Activated CD8-positive, alpha-beta T cell treated with anti-CD3 and anti-CD28 coated beads, Interleukin-2, amount 10 ng/mL, durations not matched to agents 7 days and 5 days (primary cell): ENCODE measurements at regions of chr9 and their contacts with region 1.

Region 1: GRCh38 chr9:128117613-128118471 is 9.7 kb downstream of the PTGES2 start:
- DNase-seq: peak; percentile 98
- ATAC-seq: peak; percentile 90
- H3K4me3 Mint-ChIP-seq: no peak overlapping the region
- H3K27ac Mint-ChIP-seq: no peak overlapping the region
- H3K4me1 Mint-ChIP-seq: peaks cover 10% of the 10 kb centered on the region
- H3K27me3 Mint-ChIP-seq: no peaks in the 10 kb centered on the region

Region 2: DNA sequence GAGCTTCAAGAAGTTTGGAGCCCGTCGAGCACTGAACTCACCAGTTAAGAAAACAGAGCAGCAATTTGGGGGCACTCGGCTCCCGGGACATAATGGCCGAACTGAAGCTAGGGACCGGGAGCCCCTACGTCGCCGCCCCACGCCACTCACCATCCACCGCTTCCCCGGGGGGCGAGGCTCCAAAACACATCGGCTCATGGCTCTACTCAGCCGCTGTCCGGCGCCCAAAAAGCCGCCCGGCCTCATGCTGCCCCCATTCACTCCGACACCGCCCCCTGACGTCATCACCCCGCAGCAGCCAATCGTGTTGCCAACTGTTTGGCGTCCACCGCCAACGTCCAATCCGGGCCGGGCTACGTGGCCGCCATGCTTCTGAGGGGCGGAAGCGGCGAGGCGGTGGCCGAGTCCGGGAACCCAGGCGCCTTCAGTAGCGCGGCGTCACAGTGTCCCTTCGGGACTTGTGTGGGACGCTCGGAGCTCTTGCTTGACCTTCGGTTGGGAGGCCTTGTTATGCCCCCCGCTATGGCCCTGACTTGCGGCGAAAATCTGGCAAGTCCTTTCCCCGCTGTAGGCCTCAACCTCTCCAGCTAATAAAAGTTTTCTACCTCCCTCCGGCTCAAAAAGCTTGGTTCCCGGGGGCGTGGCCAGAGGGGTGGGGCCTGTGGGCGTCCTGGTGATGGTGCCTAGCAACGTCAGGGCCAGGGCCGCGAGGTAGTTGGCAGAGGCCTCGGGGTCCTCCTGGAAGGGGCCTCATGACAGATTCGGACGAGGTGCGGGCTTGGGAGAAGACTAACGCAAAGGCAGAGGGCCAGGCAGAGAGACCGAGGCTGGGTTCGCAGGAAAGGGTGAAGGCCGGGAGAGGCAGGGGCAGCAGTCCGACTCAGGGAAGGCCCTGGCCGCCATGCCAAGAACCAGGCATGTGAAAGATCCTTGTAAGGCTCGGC is 402.2 kb before region 1 on chr9 and contains the starts of genes PTRH1 and TTC16:
- CTCF ChIA-PET with region 1: no interaction called
- POLR2A ChIA-PET with region 1: no interaction called
- DNase-seq: peak; percentile 98
- ATAC-seq: peak; percentile 95
- H3K4me3 Mint-ChIP-seq: peak within 1 kb of the TSS; percentile 99
- H3K27ac Mint-ChIP-seq: peak within 1 kb of the TSS; percentile 96
- H3K4me1 Mint-ChIP-seq: peaks cover 42% of the 10 kb centered on the region
- H3K27me3 Mint-ChIP-seq: peaks cover 2% of the 10 kb centered on the region
- total RNA-seq, gene PTRH1: 10.2 to 14.1 TPM
- total RNA-seq, gene TTC16: 4.7 to 5.0 TPM

Region 3: GRCh38 chr9:127955294-127956035 is 162.4 kb before region 1 on chr9:
- CTCF ChIA-PET with region 1: interaction called, 13 read pairs
- POLR2A ChIA-PET with region 1: no interaction called
- DNase-seq: peak; percentile 83
- ATAC-seq: peak; percentile 96
- H3K4me3 Mint-ChIP-seq: peak overlapping the region; percentile 21
- H3K27ac Mint-ChIP-seq: peak overlapping the region; percentile 70
- H3K4me1 Mint-ChIP-seq: peaks cover 89% of the 10 kb centered on the region
- H3K27me3 Mint-ChIP-seq: no peaks in the 10 kb centered on the region

Region 4: DNA sequence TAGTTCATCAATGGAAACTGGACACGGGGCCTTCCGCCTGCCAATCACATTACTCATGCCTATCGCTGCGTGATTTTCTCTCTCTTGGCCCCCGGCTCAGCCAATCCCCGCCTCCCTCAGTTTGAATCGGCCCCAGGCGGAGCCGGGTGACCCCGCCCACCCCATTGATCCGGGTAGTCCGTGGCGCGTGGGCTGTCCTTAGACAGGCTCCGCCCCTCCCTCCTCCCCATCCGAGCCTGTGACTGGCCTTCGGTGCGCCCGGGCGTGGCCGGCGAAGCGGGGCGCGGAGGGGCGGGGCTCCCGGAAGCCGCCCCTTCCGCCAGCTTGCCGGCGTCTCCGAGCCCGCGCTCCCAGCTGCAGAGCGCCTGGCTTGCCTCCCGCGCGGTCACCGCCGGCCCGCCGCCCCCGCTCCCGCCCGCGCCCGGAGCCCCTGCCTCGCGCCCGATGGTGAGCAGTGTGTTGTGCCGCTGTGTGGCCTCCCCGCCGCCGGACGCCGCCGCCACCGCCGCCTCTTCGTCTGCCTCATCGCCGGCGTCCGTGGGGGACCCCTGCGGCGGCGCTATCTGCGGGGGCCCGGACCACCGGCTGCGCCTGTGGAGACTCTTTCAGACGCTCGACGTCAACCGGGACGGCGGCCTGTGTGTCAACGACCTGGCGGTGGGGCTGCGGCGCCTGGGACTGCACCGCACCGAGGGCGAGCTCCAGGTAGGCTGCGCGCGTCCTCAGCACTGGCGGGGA is 49.8 kb before region 1 on chr9 and contains the start of gene SLC25A25:
- CTCF ChIA-PET with region 1: interaction called, 18 read pairs
- POLR2A ChIA-PET with region 1: no interaction called
- DNase-seq: peak; percentile 100
- ATAC-seq: peak; percentile 82
- H3K4me3 Mint-ChIP-seq: peak within 1 kb of the TSS; percentile 99
- H3K27ac Mint-ChIP-seq: peak within 1 kb of the TSS; percentile 90
- H3K4me1 Mint-ChIP-seq: peaks cover 50% of the 10 kb centered on the region
- H3K27me3 Mint-ChIP-seq: no peaks in the 10 kb centered on the region
- total RNA-seq, gene SLC25A25: 17.2 to 19.2 TPM

Region 5: DNA sequence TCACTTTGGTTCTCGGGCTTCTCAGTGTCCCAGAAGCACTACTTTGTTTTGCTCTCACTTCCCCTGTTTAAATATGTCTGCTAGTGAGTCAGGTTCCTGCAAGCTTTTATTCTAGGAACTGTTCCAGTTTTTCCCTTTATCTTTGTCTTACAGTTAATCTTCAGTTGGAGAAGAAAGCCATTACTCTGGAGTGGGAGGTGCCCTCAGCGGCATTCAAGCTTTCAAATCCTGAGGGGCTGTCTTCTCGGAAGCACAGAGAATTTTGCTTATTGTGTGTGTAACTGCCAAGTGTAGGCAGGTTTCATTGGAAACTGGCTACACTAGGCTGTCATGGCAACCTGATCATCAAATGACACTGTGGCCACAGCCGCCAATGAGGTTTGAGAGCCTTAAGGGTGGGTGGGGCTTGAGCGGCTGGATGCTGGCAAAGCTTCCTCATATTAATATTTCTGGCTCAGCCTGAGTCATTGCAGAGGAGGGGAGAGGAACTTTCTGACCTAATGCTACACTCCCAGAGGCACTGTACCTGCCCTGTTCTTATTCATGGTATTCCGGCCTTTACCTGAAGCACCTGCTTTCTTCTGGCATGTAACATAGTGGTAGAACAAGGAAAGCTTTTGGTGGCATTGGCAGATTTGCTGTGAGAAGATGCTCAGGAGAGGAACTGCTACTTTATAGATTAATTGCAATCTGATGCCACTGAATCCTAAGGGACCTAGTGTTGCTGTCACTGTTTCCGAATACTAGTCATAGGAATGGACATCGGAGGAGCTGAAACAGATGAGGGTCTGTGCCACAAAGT is 23.5 kb before region 1 on chr9:
- CTCF ChIA-PET with region 1: interaction called, 30 read pairs
- POLR2A ChIA-PET with region 1: interaction called, 3 read pairs
- DNase-seq: peak; percentile 73
- ATAC-seq: peak; percentile 89
- H3K4me3 Mint-ChIP-seq: no peak overlapping the region
- H3K27ac Mint-ChIP-seq: peak overlapping the region; percentile 79
- H3K4me1 Mint-ChIP-seq: peaks cover 75% of the 10 kb centered on the region
- H3K27me3 Mint-ChIP-seq: no peaks in the 10 kb centered on the region

Region 6: GRCh38 chr9:128127990-128128835 is 10.4 kb after region 1 on chr9:
- CTCF ChIA-PET with region 1: interaction called, 42 read pairs
- POLR2A ChIA-PET with region 1: no interaction called
- DNase-seq: peak; percentile 87
- ATAC-seq: peak; percentile 83
- H3K4me3 Mint-ChIP-seq: peak overlapping the region; percentile 97
- H3K27ac Mint-ChIP-seq: peak overlapping the region; percentile 99
- H3K4me1 Mint-ChIP-seq: peaks cover 37% of the 10 kb centered on the region
- H3K27me3 Mint-ChIP-seq: peaks cover 18% of the 10 kb centered on the region

Region 7: GRCh38 chr9:128259156-128259555 is 141.3 kb after region 1 on chr9:
- CTCF ChIA-PET with region 1: no interaction called
- POLR2A ChIA-PET with region 1: no interaction called
- DNase-seq: no peak
- ATAC-seq: no peak
- H3K4me3 Mint-ChIP-seq: no peak overlapping the region
- H3K27ac Mint-ChIP-seq: no peak overlapping the region
- H3K4me1 Mint-ChIP-seq: no peaks in the 10 kb centered on the region
- H3K27me3 Mint-ChIP-seq: no peaks in the 10 kb centered on the region